Lower leg skin (tissue), 4 donors: ENCODE measurements at regions of chr6 and their contacts with region 1.

Region 1: GRCh38 chr6:169831450-169832246 is 80.2 kb downstream of the ERMARD start:
- DNase-seq: peak; percentile 58 to 95
- H3K4me3 ChIP-seq: no peak overlapping the region
- CTCF ChIP-seq: peak in 1 of 3 donors; percentile 60
- POLR2A ChIP-seq: no peak

Region 2: DNA sequence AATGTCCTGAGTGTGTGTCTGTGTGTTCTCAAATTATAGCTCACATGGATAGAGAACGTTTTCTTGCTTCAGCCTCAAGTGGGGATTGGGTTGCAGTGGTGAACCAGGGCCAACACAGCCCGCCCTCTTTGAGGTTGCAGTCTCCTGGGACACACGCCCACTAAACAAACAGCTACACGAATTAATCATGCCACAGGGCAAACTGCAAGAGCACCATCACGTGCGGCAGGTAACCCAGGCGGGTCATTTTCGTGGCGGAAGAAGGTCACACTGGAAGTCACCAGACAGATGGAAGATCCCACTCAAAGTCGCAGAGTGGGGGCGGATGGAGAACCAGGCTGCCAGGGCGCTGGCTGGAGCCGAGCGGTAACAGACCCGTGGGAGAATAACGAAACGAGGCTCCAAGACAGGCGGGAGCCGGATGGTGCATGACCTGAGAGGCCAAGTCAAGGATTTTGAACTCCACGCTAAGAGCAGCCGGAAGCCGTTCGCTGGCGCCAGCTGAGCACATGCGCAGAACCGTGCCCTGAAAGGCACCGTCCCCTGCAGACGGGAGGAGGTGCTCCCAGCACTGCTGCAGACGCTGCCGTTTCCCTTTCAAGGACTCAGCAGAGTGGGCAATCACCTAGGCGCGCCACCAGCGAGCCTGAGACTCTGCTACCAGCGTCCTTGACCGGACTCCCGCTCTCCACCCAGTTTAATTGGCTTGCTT is 448.5 kb after region 1 on chr6:
- intact Hi-C with region 1: loop called (anchors 10 kb)
- DNase-seq: no peak
- H3K4me3 ChIP-seq: no peak overlapping the region
- CTCF ChIP-seq: no peak
- POLR2A ChIP-seq: no peak

Region 3: GRCh38 chr6:170516783-170517616 is 685.4 kb after region 1 on chr6:
- intact Hi-C with region 1: loop called (anchors 5 kb)
- DNase-seq: peak in 1 of 2 donors; percentile 20
- H3K4me3 ChIP-seq: no peak overlapping the region
- CTCF ChIP-seq: peak in 1 of 3 donors; percentile 50
- POLR2A ChIP-seq: no peak

Region 4: GRCh38 chr6:170529839-170530469 is 698.3 kb after region 1 on chr6:
- intact Hi-C with region 1: loop called (anchors 5 kb)
- DNase-seq: peak; percentile 59 to 93
- H3K4me3 ChIP-seq: no peak overlapping the region
- CTCF ChIP-seq: peak in 1 of 3 donors; percentile 65
- POLR2A ChIP-seq: no peak